Activated CD8-positive, alpha-beta T cell treated with anti-CD3 and anti-CD28 coated beads for 36 hours (primary cell): ENCODE measurements at regions of chr5 and their contacts with region 1.

Region 1: GRCh38 chr5:134140530-134141201 is 26.2 kb downstream of the TCF7 start:
- DNase-seq: peak; percentile 80
- ATAC-seq: peak; percentile 48
- H3K4me3 Mint-ChIP-seq: no peak overlapping the region
- H3K27ac Mint-ChIP-seq: peak overlapping the region; percentile 46
- H3K4me1 Mint-ChIP-seq: peaks cover 72% of the 10 kb centered on the region
- H3K27me3 Mint-ChIP-seq: no peaks in the 10 kb centered on the region
- CTCF ChIP-seq: peak; percentile 90

Region 2: GRCh38 chr5:133996683-133997252 is 143.9 kb before region 1 on chr5:
- CTCF ChIA-PET with region 1: interaction called, 11 read pairs
- POLR2A ChIA-PET with region 1: no interaction called
- intact Hi-C with region 1: no loop called
- DNase-seq: no peak
- ATAC-seq: no peak
- H3K4me3 Mint-ChIP-seq: no peak overlapping the region
- H3K27ac Mint-ChIP-seq: no peak overlapping the region
- H3K4me1 Mint-ChIP-seq: peaks cover 66% of the 10 kb centered on the region
- H3K27me3 Mint-ChIP-seq: no peaks in the 10 kb centered on the region
- CTCF ChIP-seq: peak; percentile 65

Region 3: GRCh38 chr5:134070725-134071613 is 69.7 kb before region 1 on chr5:
- CTCF ChIA-PET with region 1: interaction called, 18 read pairs
- POLR2A ChIA-PET with region 1: interaction called, 12 read pairs
- intact Hi-C with region 1: no loop called
- DNase-seq: peak; percentile 69
- ATAC-seq: peak; percentile 55
- H3K4me3 Mint-ChIP-seq: peak overlapping the region; percentile 64
- H3K27ac Mint-ChIP-seq: peak overlapping the region; percentile 89
- H3K4me1 Mint-ChIP-seq: peaks cover 65% of the 10 kb centered on the region
- H3K27me3 Mint-ChIP-seq: no peaks in the 10 kb centered on the region
- CTCF ChIP-seq: no peak

Region 4: GRCh38 chr5:134101686-134102439 is 38.8 kb before region 1 on chr5:
- CTCF ChIA-PET with region 1: no interaction called
- POLR2A ChIA-PET with region 1: no interaction called
- intact Hi-C with region 1: loop called (anchors 2 kb)
- DNase-seq: peak; percentile 82
- ATAC-seq: peak; percentile 31
- H3K4me3 Mint-ChIP-seq: no peak overlapping the region
- H3K27ac Mint-ChIP-seq: peak overlapping the region; percentile 11
- H3K4me1 Mint-ChIP-seq: peaks cover 86% of the 10 kb centered on the region
- H3K27me3 Mint-ChIP-seq: no peaks in the 10 kb centered on the region
- CTCF ChIP-seq: peak; percentile 88

Region 5: GRCh38 chr5:134161513-134162395 is 21.1 kb after region 1 on chr5:
- CTCF ChIA-PET with region 1: interaction called, 43 read pairs
- POLR2A ChIA-PET with region 1: interaction called, 4 read pairs
- intact Hi-C with region 1: no loop called
- DNase-seq: no peak
- ATAC-seq: peak; percentile 42
- H3K4me3 Mint-ChIP-seq: no peak overlapping the region
- H3K27ac Mint-ChIP-seq: peak overlapping the region; percentile 69
- H3K4me1 Mint-ChIP-seq: peaks cover 39% of the 10 kb centered on the region
- H3K27me3 Mint-ChIP-seq: no peaks in the 10 kb centered on the region
- CTCF ChIP-seq: no peak